WTC11 (cell line): ENCODE measurements at regions of chr7 and their contacts with region 1.

Region 1: GRCh38 chr7:112143582-112143981 is 62.6 kb downstream of the DOCK4 start:
- DNase-seq: no peak
- ATAC-seq: no peak
- H3K4me3 Mint-ChIP-seq: no peak overlapping the region
- H3K27ac Mint-ChIP-seq: no peak overlapping the region
- H3K4me1 Mint-ChIP-seq: peaks cover 32% of the 10 kb centered on the region
- H3K27me3 Mint-ChIP-seq: no peaks in the 10 kb centered on the region
- CTCF ChIP-seq: no peak

Region 2: DNA sequence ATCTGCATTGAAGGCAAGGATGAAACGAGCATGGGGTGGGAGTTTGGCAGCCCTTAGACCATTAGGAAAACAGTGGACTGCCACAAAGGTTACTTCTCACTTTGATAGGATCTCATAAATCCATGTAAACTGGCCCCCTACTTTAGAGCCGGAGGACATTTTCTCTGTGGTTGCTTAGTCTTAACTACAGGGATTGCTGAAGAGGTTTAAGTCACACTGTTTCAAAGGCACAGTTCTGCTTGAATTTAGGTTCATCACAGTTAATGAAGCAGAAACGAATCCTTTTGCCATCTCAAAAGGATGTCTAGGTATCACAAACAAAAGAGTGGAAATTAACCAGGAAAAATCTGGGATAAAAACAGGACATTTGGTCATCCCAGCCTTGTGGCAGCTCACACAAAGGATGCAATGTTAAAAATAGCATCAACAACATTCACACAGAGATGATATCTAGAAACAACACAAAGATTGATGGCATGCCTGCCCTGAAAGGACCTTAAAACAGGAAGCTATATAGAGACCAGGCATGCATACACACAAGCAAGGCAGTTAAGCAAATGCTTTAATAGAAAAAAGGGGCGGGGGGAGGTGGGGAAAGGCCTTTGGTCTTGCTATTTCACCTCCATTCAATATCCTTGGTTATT is 11.4 kb before region 1 on chr7:
- CTCF ChIA-PET with region 1: no interaction called
- POLR2A ChIA-PET with region 1: interaction called, 13 read pairs
- DNase-seq: no peak
- ATAC-seq: peak; percentile 16; the same call in 1 of the 2 replicates
- H3K4me3 Mint-ChIP-seq: no peak overlapping the region
- H3K27ac Mint-ChIP-seq: no peak overlapping the region
- H3K4me1 Mint-ChIP-seq: peaks cover 52% of the 10 kb centered on the region
- H3K27me3 Mint-ChIP-seq: no peaks in the 10 kb centered on the region
- CTCF ChIP-seq: no peak

Region 3: GRCh38 chr7:112254156-112254555 is 110.6 kb after region 1 on chr7:
- CTCF ChIA-PET with region 1: no interaction called
- POLR2A ChIA-PET with region 1: no interaction called
- DNase-seq: no peak
- ATAC-seq: no peak
- H3K4me3 Mint-ChIP-seq: no peak overlapping the region
- H3K27ac Mint-ChIP-seq: no peak overlapping the region
- H3K4me1 Mint-ChIP-seq: peaks cover 70% of the 10 kb centered on the region
- H3K27me3 Mint-ChIP-seq: peaks cover 38% of the 10 kb centered on the region
- CTCF ChIP-seq: no peak